ENCODE measurements at regions of chr16 and their contacts with region 1.

Region 1: GRCh38 chr16:11977376-11978041 is 975 bp downstream of the SNX29 start:
- DNase-seq: no peak
- ATAC-seq: no peak
- H3K4me3 Mint-ChIP-seq: peak overlapping the region; percentile 85 to 97 (median 93)
- H3K27ac Mint-ChIP-seq: peak overlapping the region; percentile 82 to 98 (median 89)
- H3K4me1 Mint-ChIP-seq: peaks cover 27 to 53% (median 44%) of the 10 kb centered on the region in 4 donors
- H3K27me3 Mint-ChIP-seq: no peaks in the 10 kb centered on the region

Region 2: GRCh38 chr16:11915644-11916523 is 61.6 kb before region 1 on chr16 and contains the start of gene GSPT1:
- POLR2A ChIA-PET with region 1: interaction called, 14 read pairs
- DNase-seq: peak; percentile 95 to 100 (median 99)
- ATAC-seq: peak; percentile 85 to 86
- H3K4me3 Mint-ChIP-seq: peak within 1 kb of the TSS; percentile 88 to 99 (median 95)
- H3K27ac Mint-ChIP-seq: peak within 1 kb of the TSS; percentile 93 to 98 (median 97)
- H3K4me1 Mint-ChIP-seq: peaks cover 17 to 40% (median 33%) of the 10 kb centered on the region in 4 donors
- H3K27me3 Mint-ChIP-seq: no peaks in the 10 kb centered on the region
- polyA plus RNA-seq, gene GSPT1: 64.0 to 91.1 (median 65.9) TPM

Region 3: DNA sequence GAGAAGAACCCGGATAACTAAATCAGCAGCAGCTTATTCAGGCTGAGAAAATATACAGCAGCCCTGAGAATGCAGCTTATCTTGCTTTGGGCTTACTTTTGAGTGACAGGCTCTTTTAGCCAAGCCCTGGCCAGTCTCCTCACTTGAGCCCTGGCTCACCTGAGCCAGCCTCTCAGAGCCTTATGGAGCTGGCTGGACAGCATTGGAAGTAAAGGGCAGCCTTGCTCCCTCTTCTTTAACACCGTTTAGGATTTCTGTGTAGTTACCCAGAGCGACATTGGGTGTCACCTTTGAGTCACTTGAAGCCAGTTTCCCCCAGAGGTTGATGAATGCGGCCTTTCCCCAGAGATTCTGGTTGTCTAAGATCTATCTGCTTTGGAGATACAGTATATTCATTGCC is 28.0 kb before region 1 on chr16:
- POLR2A ChIA-PET with region 1: no interaction called
- DNase-seq: peak in 7 of 10 donors; percentile 3 to 72 (median 9)
- ATAC-seq: peak; percentile 70 to 72
- H3K4me3 Mint-ChIP-seq: no peak overlapping the region
- H3K27ac Mint-ChIP-seq: no peak overlapping the region
- H3K4me1 Mint-ChIP-seq: peaks cover 0 to 8% (median 6%) of the 10 kb centered on the region in 4 donors
- H3K27me3 Mint-ChIP-seq: no peaks in the 10 kb centered on the region

Region 4: DNA sequence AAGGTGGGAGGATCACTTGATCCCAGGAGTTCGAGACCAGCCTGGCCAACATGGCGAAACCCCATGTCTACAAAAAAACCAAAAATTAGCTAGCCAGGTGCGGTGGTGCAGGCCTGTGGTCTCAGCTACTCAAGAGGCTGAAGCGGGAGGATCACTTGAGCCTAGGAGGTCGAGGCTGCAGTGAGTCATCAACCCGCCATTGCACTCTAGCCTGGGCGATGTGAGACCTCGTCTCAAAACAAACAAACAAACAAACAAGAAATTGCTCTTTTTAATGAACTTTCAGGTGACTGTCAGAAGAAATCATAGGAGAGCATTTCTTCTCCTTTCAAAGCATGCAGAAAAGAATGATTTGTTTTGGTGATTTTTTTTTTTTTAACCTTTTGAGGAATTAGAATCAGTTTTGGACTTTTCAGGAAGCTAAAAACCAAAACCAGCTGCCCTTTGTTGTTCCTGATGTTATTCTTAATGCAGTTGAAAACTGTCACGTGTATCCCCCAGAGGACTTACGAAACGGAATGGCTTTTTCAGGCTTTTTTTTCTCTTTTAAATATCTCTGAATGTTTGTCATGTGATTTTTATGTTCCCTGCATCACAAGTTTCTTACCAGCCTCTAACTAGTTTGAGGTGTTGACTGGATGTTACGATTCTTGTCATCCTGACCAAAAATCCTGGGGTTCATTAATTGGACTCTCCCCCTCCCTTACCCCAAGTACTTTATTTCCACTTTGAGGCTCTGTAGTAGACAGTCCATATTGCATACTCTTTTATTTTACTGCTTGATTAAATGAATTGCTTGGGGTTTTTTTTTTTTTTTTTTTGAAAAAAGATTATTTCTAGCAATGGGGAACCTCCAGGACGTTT is 33.1 kb after region 1 on chr16:
- POLR2A ChIA-PET with region 1: interaction called, 14 read pairs
- DNase-seq: no peak
- ATAC-seq: peak in 1 of 2 donors; percentile 39
- H3K4me3 Mint-ChIP-seq: peak overlapping the region in 9 of 10 donors; percentile 4 to 66 (median 57)
- H3K27ac Mint-ChIP-seq: peak overlapping the region; percentile 76 to 92 (median 89)
- H3K4me1 Mint-ChIP-seq: peaks cover 7 to 36% (median 28%) of the 10 kb centered on the region in 4 donors
- H3K27me3 Mint-ChIP-seq: no peaks in the 10 kb centered on the region

Measured in naive thymus-derived CD8-positive, alpha-beta T cell (primary cell).